ENCODE measurements at regions of chr3 and their contacts with region 1.

Region 1: GRCh38 chr3:194682694-194683310 is 2.9 kb upstream of the FAM43A start:
- DNase-seq: peak; percentile 89
- H3K4me3 ChIP-seq: no peak overlapping the region
- H3K27ac ChIP-seq: no peak overlapping the region
- H3K4me1 ChIP-seq: peaks cover 37% of the 10 kb centered on the region
- CTCF ChIP-seq: peak; percentile 96

Region 2: DNA sequence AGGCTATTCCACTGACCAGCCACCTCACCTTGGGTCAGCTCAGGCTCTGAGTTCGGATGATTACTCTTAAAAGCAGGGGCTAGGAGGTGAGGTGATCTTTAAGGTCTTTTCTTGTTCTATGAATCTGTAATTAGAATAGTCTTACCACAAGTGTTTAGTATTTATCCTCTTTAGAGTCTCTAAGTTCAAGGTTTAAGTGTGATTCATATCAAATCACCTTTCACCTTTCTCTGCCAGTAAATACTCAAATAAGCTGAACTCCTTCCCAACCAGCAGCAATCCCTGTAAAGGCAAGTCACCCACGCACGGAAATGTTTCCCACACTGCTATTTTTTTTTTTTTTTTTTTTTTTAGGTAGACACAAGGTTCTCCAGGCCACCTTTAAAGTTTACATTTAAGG is 35.1 kb before region 1 on chr3:
- CTCF ChIA-PET with region 1: no interaction called
- POLR2A ChIA-PET with region 1: no interaction called
- intact Hi-C with region 1: no loop called
- DNase-seq: no peak
- H3K4me3 ChIP-seq: no peak overlapping the region
- H3K27ac ChIP-seq: no peak overlapping the region
- H3K4me1 ChIP-seq: no peaks in the 10 kb centered on the region
- CTCF ChIP-seq: no peak

Region 3: DNA sequence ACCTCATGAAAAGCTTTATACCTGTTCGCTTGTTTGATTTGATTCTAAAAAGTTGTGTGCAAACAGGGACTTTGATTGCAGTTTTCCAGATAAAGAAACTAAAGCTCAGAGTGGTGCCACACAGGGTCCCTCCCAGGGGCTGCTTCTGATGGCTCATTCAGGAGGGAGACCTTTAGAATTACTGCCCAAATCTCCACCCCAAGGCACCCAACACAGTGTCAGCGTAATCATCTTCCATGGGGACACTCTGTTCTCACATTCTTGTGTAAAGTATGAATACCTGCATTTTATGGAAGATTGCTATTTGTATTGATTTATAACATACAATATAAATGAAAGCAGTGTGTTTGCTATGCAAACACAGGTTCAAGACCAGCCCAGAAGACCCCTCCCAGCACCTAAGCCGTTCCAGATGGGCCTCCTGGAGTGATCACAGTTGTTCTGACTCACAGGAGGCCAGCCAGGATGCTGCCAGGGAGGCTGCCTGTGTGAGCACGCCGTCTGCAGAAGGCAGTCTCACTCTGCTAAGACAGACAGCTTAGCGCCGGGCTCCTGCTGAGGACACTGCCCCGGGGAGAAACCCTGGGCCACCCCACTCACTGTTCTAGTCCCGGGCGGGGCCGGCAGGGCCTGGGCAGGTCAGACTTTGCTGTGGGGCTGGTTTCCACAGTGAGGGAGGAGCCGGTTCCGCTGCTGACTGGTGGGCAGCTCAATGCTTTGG is 188.5 kb after region 1 on chr3:
- CTCF ChIA-PET with region 1: no interaction called
- POLR2A ChIA-PET with region 1: no interaction called
- intact Hi-C with region 1: loop called (anchors 10 kb)
- DNase-seq: peak; percentile 18
- H3K4me3 ChIP-seq: no peak overlapping the region
- H3K27ac ChIP-seq: no peak overlapping the region
- H3K4me1 ChIP-seq: peaks cover 11% of the 10 kb centered on the region
- CTCF ChIP-seq: no peak

Region 4: DNA sequence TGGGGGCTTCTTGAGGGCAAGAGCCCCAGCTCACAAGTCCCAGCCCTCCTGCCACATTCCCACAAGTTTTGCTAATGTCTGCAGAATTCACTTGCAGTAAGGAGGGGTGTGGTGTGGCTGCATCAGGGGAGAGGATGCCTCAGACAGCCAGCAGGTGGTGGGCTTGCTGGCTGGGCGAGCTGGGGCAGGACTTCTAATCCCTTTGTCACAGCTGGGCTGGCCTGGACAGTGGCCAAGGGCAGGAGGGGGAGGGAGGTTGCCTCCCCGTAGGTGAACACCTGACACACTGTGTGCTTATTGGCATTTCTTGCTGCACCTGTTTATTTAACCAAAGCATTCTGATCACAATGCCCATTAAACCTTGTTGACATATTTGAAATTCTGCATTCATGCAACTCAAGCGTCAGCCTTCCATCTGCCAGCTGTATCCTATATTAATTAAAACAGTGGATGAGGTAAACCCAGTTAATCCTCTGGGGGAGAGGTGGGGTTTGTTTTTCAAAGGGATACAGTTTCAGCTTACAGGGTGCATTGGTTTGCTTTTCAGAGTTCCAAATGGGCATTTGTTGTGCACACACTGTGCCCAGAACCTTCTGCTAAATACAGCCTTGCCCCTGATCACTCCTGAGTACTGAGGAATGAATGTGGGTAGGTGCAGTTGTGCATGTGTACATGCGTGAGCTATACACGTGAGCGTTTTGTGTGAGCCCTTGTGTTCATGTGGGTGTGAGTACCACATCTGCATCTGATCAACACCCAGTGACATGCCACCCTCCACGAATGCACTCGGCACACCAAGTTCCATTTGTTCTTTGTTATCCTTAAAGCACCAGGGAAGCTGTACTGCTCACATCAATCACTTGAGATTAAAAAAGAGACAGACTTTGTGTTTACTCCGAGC is 319.4 kb after region 1 on chr3:
- CTCF ChIA-PET with region 1: interaction called, 4 read pairs
- POLR2A ChIA-PET with region 1: interaction called, 3 read pairs
- intact Hi-C with region 1: loop called (anchors 5 kb)
- DNase-seq: peak; percentile 58
- H3K4me3 ChIP-seq: no peak overlapping the region
- H3K27ac ChIP-seq: no peak overlapping the region
- H3K4me1 ChIP-seq: peaks cover 4% of the 10 kb centered on the region
- CTCF ChIP-seq: peak; percentile 80

Region 5: DNA sequence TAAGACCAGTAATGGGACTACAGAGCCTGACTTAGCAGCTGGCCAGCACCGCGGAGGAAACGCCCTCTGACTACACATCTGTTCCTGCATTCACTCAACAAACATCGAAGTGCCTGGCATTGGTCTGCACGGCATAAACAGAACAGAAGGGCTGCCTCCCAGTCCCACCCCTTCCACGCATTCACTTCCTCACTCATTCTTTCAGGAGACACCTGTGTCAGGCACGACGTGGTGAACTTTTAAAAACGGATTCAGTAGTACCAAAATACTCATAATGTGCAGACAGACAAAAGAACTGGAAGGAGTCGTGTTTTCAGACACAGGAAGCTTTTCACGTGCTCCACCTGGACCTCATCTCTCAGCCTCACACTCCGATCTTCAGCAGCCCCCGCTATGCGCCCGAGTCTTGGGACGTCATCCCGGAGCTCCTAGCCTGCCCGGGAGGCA is 464.9 kb after region 1 on chr3:
- CTCF ChIA-PET with region 1: no interaction called
- POLR2A ChIA-PET with region 1: no interaction called
- intact Hi-C with region 1: loop called (anchors 5 kb)
- DNase-seq: peak; percentile 80
- H3K4me3 ChIP-seq: peak overlapping the region; percentile 63
- H3K27ac ChIP-seq: peak overlapping the region; percentile 77
- H3K4me1 ChIP-seq: peaks cover 71% of the 10 kb centered on the region
- CTCF ChIP-seq: no peak

Region 6: GRCh38 chr3:195442573-195443390 is 760.0 kb after region 1 on chr3 and contains the start of gene ACAP2:
- CTCF ChIA-PET with region 1: no interaction called
- POLR2A ChIA-PET with region 1: no interaction called
- intact Hi-C with region 1: loop called (anchors 2 kb)
- DNase-seq: peak; percentile 99
- H3K4me3 ChIP-seq: peak within 1 kb of the TSS; percentile 79
- H3K27ac ChIP-seq: peak within 1 kb of the TSS; percentile 85
- H3K4me1 ChIP-seq: peaks cover 57% of the 10 kb centered on the region
- CTCF ChIP-seq: no peak; the same call in 1 of the 2 replicates
- total RNA-seq, gene ACAP2: 43.9 and 60.8 TPM in 2 replicates

Region 7: GRCh38 chr3:195909644-195910508 is 1227.1 kb after region 1 on chr3:
- CTCF ChIA-PET with region 1: no interaction called
- POLR2A ChIA-PET with region 1: no interaction called
- intact Hi-C with region 1: loop called (anchors 5 kb)
- DNase-seq: peak; percentile 88
- H3K4me3 ChIP-seq: peak overlapping the region; percentile 63
- H3K27ac ChIP-seq: peak overlapping the region; percentile 41
- H3K4me1 ChIP-seq: peaks cover 45% of the 10 kb centered on the region
- CTCF ChIP-seq: 0 out of 2 replicates have a peak, but pooled peaks have one; percentile 11

Measured in OCI-LY7 (cell line).